CD8-positive, alpha-beta memory T cell (primary cell): ENCODE measurements at regions of chr2 and their contacts with region 1.

Region 1: DNA sequence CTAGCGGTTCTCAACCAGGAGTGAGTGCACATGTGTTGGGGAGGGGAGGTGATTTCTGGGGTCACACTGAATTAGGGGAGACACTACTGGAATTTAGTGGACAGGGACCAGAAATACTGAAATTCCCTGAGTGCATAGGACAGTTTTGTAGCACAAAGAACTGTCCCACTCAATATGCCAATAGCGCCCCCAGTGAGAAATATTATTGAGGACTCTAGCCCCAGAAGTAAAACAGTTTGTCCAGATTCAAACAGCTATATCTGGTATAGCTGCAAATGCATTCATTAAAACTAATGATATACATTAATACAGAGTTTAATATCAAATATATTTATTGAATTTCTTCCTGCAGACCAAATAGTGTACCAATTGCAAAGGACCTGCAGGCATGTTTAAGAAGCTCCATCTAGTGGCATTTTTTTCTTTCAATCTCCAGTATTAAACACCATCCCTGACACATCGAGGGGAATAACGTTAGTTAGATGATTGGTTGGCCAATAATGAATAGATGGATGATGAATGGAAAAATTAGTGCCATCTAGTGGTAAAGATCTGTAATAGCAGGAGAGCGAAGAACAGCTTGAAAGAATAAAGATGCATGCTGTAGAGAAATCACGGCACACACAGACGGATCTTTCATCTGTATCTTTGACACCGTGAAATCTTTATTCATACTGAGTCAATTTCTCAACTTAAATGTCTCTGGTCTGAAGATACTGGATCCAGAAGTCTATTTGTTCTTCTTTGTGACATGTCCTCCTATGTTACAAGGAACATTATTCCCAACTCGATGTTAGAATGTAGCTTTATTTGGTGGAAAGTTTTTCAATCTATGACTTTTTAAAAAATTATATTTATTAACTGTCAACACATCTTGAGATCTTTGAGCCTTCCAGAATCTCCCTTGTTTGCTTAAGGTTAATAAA is 62.5 kb downstream of the DHRS9 start:
- DNase-seq: peak in 2 of 5 donors; percentile 30 to 39
- H3K4me3 ChIP-seq: no peak overlapping the region
- H3K4me3 Mint-ChIP-seq: no peak overlapping the region
- H3K27ac ChIP-seq: no peak overlapping the region
- H3K27ac Mint-ChIP-seq: no peak overlapping the region
- H3K4me1 ChIP-seq: no peaks in the 10 kb centered on the region
- H3K4me1 Mint-ChIP-seq: peaks cover 0 to 4% (median 4%) of the 10 kb centered on the region in 3 donors
- H3K27me3 ChIP-seq: no peaks in the 10 kb centered on the region
- H3K27me3 Mint-ChIP-seq: peaks cover 0 to 2% of the 10 kb centered on the region in 2 donors

Region 2: DNA sequence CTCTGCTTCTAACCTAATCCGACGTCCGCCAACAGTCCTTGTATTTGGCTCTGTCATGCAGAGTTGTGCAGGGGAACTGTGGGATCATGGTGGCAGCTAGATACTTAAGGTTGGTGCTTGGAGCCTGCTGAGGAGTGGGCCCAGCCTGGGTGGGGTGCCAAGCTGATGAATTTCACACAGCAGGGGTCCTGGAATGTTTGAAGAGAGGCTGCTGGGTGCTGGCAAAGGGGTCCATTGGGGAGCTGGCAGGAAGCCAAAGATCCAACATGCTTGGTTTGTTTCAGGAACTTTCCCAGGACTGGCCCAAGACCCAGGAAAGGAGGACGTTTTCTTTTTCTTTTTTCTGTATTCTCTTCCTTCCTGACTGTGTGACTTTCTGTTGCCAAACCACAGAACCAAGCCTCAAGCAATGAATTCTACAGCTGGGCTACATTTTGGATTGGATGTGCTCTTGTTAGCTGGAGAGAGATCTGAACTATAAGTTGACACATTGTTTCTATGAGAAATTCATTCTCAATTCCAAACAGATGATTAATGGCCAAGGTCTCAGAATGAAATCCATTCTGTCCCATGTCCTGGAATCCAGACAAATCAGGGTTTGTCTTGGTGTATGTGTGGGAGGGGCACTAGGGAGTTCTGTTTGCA is 12.6 kb before region 1 on chr2:
- CTCF ChIA-PET with region 1: interaction called, 14 read pairs
- POLR2A ChIA-PET with region 1: no interaction called
- DNase-seq: no peak
- H3K4me3 ChIP-seq: no peak overlapping the region
- H3K4me3 Mint-ChIP-seq: no peak overlapping the region
- H3K27ac ChIP-seq: no peak overlapping the region
- H3K27ac Mint-ChIP-seq: no peak overlapping the region
- H3K4me1 ChIP-seq: no peaks in the 10 kb centered on the region
- H3K4me1 Mint-ChIP-seq: no peaks in the 10 kb centered on the region
- H3K27me3 ChIP-seq: peaks cover under 1% of the 10 kb centered on the region
- H3K27me3 Mint-ChIP-seq: peaks cover 12 to 35% of the 10 kb centered on the region in 2 donors